ENCODE measurements at regions of chr4 and their contacts with region 1.

Region 1: DNA sequence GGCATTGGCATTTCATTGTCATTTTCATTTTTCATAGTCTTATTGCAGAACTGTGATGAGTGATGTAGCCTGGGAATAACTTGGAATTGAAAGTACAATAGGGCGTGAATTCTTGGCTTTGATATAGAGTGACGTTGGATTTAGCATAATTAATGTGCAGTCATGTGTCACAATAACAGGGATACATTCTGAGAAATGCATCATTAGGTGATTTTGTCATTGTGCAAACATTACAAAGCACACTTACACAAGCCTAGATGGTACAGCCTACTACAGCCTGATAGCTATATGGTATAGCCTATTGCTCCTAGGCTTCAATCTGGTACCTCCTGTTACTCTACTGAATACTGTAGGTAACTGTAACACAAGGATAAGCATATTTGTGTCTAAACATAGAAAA is 300.8 kb downstream of the DTHD1 start:
- DNase-seq: no peak
- H3K4me3 ChIP-seq: no peak overlapping the region
- H3K27ac ChIP-seq: no peak overlapping the region
- H3K4me1 ChIP-seq: no peaks in the 10 kb centered on the region
- H3K27me3 ChIP-seq: no peaks in the 10 kb centered on the region
- CTCF ChIP-seq: no peak
- POLR2A ChIP-seq: no peak

Region 2: GRCh38 chr4:36532670-36533379 is 49.4 kb before region 1 on chr4:
- intact Hi-C with region 1: loop called (anchors 2 kb)
- DNase-seq: no peak
- H3K4me3 ChIP-seq: no peak overlapping the region
- H3K27ac ChIP-seq: no peak overlapping the region
- H3K4me1 ChIP-seq: no peaks in the 10 kb centered on the region
- H3K27me3 ChIP-seq: no peaks in the 10 kb centered on the region
- CTCF ChIP-seq: no peak
- POLR2A ChIP-seq: no peak